Esophagus muscularis mucosa (tissue), 4 donors: ENCODE measurements at regions of chr2 and their contacts with region 1.

Region 1: DNA sequence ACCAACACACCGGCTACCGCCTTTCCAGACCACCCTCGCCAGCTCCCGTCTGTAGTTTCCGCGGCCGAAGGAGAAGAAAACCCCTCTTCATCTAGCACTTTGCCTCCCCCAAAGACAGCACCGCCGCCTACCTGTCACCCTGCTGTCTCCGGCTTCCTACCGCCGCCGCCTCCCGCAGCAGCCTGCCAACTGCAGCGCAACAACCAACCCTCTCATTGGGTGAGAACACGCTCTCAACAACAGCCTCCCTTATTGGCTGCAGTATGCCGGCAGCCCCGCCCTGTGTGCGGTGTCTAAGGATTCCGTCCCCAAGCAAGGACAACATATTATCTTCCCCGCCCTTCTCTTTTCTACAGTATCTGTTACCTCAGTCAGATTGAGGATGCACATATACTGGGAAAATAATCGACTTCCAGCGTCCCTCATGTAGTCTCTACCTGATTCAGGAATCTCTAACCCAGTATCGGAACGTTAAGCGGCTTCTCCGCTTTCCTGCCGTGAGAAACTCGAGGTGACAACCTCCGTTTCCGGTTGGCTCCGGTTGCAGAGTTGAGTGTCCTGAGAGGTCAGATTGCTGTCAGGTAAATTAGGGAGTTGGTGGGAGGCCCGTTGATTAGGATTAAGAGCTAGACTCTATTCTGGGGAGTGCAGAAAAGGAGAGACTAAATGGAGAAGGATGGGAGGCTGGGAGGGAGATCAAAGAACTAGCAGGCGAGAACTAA is at the starts of genes HYCC2 and NDUFB3:
- DNase-seq: peak; percentile 98
- H3K4me3 ChIP-seq: peak within 1 kb of the TSS; percentile 70 to 90 (median 79)
- H3K27ac ChIP-seq: peak within 1 kb of the TSS; percentile 85 to 91 (median 88)
- H3K4me1 ChIP-seq: peaks cover 35 to 76% (median 69%) of the 10 kb centered on the region in 4 donors
- H3K27me3 ChIP-seq: no peaks in the 10 kb centered on the region
- CTCF ChIP-seq: peak in 2 of 3 experiments; percentile 30 to 32
- EP300 ChIP-seq: no peak
- POLR2A ChIP-seq: no peak
- total RNA-seq, gene HYCC2: 9.1 to 15.4 (median 10.8) TPM
- total RNA-seq, gene NDUFB3: 36.0 to 100 (median 47.6) TPM

Region 2: GRCh38 chr2:200963124-200963917 is 108.3 kb before region 1 on chr2 and contains the start of gene ORC2:
- intact Hi-C with region 1: loop called (anchors 5 kb)
- DNase-seq: peak; percentile 97
- H3K4me3 ChIP-seq: peak within 1 kb of the TSS; percentile 72 to 94 (median 83)
- H3K27ac ChIP-seq: peak within 1 kb of the TSS; percentile 82 to 94 (median 90)
- H3K4me1 ChIP-seq: peaks cover 27 to 49% (median 32%) of the 10 kb centered on the region in 4 donors
- H3K27me3 ChIP-seq: no peaks in the 10 kb centered on the region
- CTCF ChIP-seq: peak; percentile 28 to 70 (median 30)
- EP300 ChIP-seq: no peak
- POLR2A ChIP-seq: no peak
- total RNA-seq, gene ORC2: 9.4 to 15.0 (median 10.8) TPM

Region 3: DNA sequence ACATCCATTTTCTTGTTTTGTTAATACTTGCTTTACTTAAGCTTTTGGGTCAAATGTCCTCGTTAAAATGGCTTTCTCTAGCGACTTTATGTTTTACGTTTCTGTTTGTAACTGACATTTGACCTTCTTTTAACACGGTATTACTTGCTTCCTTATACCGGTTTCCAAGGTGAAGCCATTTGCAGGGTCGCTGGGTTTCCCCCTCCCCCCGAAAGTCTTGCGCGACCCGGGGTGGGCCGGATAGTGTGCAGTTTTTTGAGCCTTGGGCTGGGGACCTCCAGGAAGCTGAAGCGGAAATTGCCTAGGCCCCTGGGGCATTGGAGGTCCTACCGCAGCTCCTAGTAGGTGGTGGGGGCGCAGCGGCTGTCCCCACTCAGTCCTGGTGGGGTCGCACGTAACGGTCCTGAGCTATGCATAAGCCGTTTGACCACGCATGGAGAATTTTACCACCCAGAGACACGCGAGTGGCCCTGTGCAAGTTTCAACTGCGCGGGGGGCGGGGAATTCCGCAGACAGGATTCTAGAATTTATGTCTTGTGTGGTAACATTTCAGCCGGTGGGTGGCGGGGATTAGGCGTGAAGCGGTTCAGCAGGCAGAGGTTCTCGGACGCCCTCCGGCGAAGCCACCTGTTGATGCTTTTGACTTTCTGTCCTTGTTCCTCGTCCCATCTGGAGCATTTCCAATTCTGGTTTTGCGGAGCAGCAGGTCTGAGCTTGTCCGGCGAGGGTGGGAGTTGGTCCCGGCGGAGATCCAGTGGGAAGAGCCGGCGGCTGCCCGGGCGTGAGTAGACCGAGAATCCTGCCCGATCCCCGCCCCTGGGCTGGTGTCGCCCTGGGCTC is 46.7 kb after region 1 on chr2:
- intact Hi-C with region 1: loop called (anchors 5 kb)
- DNase-seq: peak; percentile 98
- H3K4me3 ChIP-seq: peak overlapping the region; percentile 76 to 91 (median 86)
- H3K27ac ChIP-seq: peak overlapping the region; percentile 96 to 100 (median 98)
- H3K4me1 ChIP-seq: peaks cover 19 to 70% (median 57%) of the 10 kb centered on the region in 4 donors
- H3K27me3 ChIP-seq: no peaks in the 10 kb centered on the region
- CTCF ChIP-seq: peak; percentile 42 to 55 (median 49)
- EP300 ChIP-seq: no peak
- POLR2A ChIP-seq: no peak

Region 4: GRCh38 chr2:201171259-201171814 is 99.7 kb after region 1 on chr2:
- intact Hi-C with region 1: loop called (anchors 10 kb)
- DNase-seq: no peak
- H3K4me3 ChIP-seq: no peak overlapping the region
- H3K27ac ChIP-seq: no peak overlapping the region
- H3K4me1 ChIP-seq: peaks cover 0 to 7% (median 3%) of the 10 kb centered on the region in 4 donors
- H3K27me3 ChIP-seq: no peaks in the 10 kb centered on the region
- CTCF ChIP-seq: no peak
- EP300 ChIP-seq: no peak
- POLR2A ChIP-seq: no peak

Region 5: DNA sequence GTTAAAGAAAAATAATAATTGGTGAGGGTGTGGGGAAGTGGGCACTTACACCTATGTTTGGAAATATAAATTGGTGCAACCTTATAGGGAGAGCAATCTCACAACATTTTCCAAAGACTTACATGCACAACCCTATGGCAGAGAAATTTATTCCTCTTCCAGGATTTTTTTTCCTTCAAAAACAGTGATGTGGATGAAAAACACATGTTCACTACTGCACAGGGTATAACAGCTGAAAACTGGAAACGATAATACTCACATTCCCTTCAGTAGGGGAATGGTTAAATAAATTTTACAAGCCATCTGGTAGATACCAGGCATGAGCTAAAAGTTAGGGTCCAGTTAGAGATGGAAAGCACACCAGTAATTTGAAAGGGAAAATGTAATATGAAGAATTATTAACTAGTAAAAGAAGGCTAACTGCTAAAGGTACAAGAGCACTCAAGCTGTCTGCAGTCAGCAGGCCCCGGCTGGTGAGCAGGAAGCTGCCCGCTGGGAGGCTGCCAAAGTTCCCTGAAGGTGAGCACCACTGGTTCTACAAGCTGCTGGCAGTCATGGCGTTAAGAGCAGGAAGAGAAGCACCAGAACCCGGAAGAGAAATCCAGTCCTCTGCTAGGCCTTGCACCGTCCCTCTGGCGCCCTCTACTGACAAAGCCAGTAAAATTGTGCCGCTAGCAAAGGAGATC is 160.3 kb after region 1 on chr2:
- intact Hi-C with region 1: no loop called
- DNase-seq: peak; percentile 95
- H3K4me3 ChIP-seq: no peak overlapping the region
- H3K27ac ChIP-seq: peak overlapping the region in 1 of 4 donors; percentile 7
- H3K4me1 ChIP-seq: peaks cover 14 to 28% (median 22%) of the 10 kb centered on the region in 4 donors
- H3K27me3 ChIP-seq: no peaks in the 10 kb centered on the region
- CTCF ChIP-seq: peak; percentile 67 to 84 (median 71)
- EP300 ChIP-seq: no peak
- POLR2A ChIP-seq: no peak